Activated B cell treated with CpG ODN at 0.5 μM for 24 hours (primary cell): ENCODE measurements at regions of chr7 and their contacts with region 1.

Region 1: DNA sequence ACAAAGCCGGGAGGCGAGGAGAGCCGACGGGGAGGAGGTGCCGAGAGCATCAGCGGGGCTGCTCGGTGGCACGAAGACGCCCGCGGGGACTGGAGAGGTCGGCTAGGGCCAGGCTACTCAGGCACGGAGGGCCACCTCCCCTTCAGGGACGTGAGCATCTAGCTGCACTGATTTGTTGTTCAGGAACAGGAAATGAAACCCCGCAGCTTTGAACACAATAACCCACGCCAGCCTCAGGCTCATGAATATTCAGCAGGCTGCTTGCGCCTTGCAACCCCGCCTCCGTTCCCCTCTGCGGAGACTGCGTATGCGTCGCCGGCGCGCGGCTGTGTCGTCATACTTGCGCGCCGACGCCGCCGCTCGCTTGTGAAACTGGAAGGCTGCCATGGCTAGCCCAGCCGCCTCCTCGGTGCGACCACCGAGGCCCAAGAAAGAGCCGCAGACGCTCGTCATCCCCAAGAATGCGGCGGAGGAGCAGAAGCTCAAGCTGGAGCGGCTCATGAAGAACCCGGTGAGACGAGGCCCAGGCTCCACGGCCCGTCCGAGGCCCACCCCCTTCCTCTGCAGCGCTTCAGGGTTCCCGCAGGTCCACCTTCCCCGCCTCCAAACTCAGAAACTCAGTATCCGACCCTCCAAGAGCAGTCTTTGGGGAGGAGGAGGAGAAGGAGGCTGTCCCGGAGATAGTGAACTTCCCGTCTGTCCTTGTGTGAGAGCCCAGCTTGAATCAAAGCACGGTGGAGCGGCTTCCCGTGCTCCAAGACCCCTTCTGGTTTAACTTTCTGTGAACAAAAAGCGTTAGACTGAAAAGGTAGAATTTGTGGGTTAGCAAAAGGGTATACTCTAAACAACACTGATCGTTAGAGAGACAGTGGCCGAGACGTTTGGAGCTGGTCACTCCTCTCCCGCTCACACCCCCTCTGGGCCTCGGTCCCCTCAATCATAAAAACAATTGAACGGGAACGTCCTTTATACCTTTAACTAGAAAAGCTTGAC is at the start of gene PRKRIP1:
- DNase-seq: peak; percentile 72
- ATAC-seq: peak; percentile 98
- H3K4me3 Mint-ChIP-seq: peak within 1 kb of the TSS; percentile 93
- H3K27ac Mint-ChIP-seq: peak within 1 kb of the TSS; percentile 96
- H3K4me1 Mint-ChIP-seq: peaks cover 34% of the 10 kb centered on the region
- H3K27me3 Mint-ChIP-seq: no peaks in the 10 kb centered on the region
- CTCF ChIP-seq: no peak
- total RNA-seq, gene PRKRIP1: 38.8 and 39.7 TPM in 2 replicates

Region 2: GRCh38 chr7:100719523-100720319 is 1676.6 kb before region 1 on chr7:
- CTCF ChIA-PET with region 1: no interaction called
- POLR2A ChIA-PET with region 1: no interaction called
- intact Hi-C with region 1: no loop called
- DNase-seq: no peak
- ATAC-seq: no peak
- H3K4me3 Mint-ChIP-seq: no peak overlapping the region
- H3K27ac Mint-ChIP-seq: no peak overlapping the region
- H3K4me1 Mint-ChIP-seq: peaks cover 4% of the 10 kb centered on the region
- H3K27me3 Mint-ChIP-seq: peaks cover 38% of the 10 kb centered on the region
- CTCF ChIP-seq: no peak

Region 3: GRCh38 chr7:101743241-101743994 is 652.9 kb before region 1 on chr7:
- CTCF ChIA-PET with region 1: no interaction called
- POLR2A ChIA-PET with region 1: interaction called, 3 read pairs
- intact Hi-C with region 1: loop called (anchors 10 kb)
- DNase-seq: peak; percentile 53
- ATAC-seq: peak; percentile 63
- H3K4me3 Mint-ChIP-seq: peak overlapping the region; percentile 82
- H3K27ac Mint-ChIP-seq: no peak overlapping the region
- H3K4me1 Mint-ChIP-seq: peaks cover 52% of the 10 kb centered on the region
- H3K27me3 Mint-ChIP-seq: no peaks in the 10 kb centered on the region
- CTCF ChIP-seq: no peak

Region 4: GRCh38 chr7:102286237-102287110 is 109.8 kb before region 1 on chr7 and contains the start of gene SH2B2:
- CTCF ChIA-PET with region 1: interaction called, 91 read pairs
- POLR2A ChIA-PET with region 1: interaction called, 34 read pairs
- intact Hi-C with region 1: loop called (anchors 1 kb)
- DNase-seq: peak; percentile 83
- ATAC-seq: peak; percentile 38
- H3K4me3 Mint-ChIP-seq: peak within 1 kb of the TSS; percentile 83
- H3K27ac Mint-ChIP-seq: peak within 1 kb of the TSS; percentile 53
- H3K4me1 Mint-ChIP-seq: peaks cover 64% of the 10 kb centered on the region
- H3K27me3 Mint-ChIP-seq: no peaks in the 10 kb centered on the region
- CTCF ChIP-seq: no peak
- total RNA-seq, gene SH2B2: 28.2 and 32.1 TPM in 2 replicates

Region 5: GRCh38 chr7:102412548-102412947 is 16.2 kb after region 1 on chr7:
- CTCF ChIA-PET with region 1: interaction called, 10 read pairs
- POLR2A ChIA-PET with region 1: interaction called, 8 read pairs
- intact Hi-C with region 1: no loop called
- DNase-seq: no peak
- ATAC-seq: no peak
- H3K4me3 Mint-ChIP-seq: no peak overlapping the region
- H3K27ac Mint-ChIP-seq: peak overlapping the region; percentile 41
- H3K4me1 Mint-ChIP-seq: peaks cover 76% of the 10 kb centered on the region
- H3K27me3 Mint-ChIP-seq: no peaks in the 10 kb centered on the region
- CTCF ChIP-seq: no peak

Region 6: DNA sequence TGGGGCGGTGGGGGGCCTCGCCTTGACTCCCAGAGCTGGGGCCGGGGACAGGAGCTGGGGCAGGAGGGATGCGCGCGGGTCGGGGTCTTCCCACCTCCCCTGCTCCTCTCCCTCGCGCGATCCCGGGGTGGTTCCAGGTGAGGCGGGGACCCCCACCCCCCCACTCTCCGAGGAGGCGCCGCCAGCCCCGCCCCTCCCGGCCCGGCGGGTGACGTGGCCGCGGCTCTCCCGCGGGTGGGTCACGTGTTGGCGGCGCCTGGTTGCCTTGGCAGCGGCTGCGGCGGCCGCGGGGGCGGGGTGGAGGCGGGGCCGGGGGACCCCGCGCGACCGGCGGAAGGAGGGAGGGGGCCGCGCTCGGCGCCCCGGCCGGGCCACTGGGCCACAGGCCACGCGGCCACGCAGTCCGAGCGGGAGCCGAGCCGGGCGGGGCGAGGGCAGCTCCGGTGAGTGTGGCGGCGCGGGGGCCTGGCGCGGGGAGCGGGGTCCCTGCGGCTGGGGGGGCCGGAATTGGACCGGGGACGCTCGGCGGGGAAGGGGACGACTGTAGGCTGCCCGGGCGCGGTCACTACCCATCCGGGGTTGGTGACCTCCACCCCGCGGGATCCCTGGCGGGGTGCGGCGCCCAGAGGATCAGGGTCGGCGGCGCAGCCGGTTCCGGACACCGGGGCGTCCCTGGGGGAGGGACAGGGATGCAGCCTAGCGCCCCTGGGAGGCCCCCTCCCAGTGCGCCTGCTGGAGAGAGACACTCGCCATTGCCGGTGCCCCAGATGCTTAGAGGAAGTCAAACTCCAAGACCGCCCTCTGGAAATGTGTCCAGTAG is 37.1 kb after region 1 on chr7 and contains the start of gene ORAI2:
- CTCF ChIA-PET with region 1: no interaction called
- POLR2A ChIA-PET with region 1: interaction called, 12 read pairs
- intact Hi-C with region 1: no loop called
- DNase-seq: peak; percentile 89
- ATAC-seq: peak; percentile 57
- H3K4me3 Mint-ChIP-seq: peak within 1 kb of the TSS; percentile 89
- H3K27ac Mint-ChIP-seq: peak within 1 kb of the TSS; percentile 100
- H3K4me1 Mint-ChIP-seq: peaks cover 80% of the 10 kb centered on the region
- H3K27me3 Mint-ChIP-seq: no peaks in the 10 kb centered on the region
- CTCF ChIP-seq: no peak
- total RNA-seq, gene ORAI2: 167 and 184 TPM in 2 replicates

Region 7: DNA sequence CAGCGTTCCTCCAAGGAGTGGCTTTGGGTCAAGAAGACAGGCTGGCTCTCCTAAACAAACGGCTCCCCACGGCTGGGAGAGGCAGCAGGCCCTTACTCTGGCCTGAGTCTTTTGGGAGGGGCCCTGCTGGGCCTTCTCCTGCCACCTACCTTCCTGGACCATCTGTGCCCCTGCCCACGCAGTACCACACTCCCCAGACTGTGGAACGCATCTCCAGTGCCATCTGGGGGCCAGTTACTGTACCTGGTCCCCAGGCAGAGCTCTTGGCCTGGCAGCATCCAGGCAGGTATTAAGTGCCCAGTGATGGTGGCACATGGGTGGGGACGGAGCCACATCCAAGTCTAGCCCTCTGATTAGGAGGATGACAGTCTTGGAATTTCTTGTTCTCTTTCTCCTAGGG is 53.9 kb after region 1 on chr7:
- CTCF ChIA-PET with region 1: interaction called, 11 read pairs
- POLR2A ChIA-PET with region 1: interaction called, 8 read pairs
- intact Hi-C with region 1: no loop called
- DNase-seq: peak; percentile 46
- ATAC-seq: peak; percentile 88
- H3K4me3 Mint-ChIP-seq: no peak overlapping the region
- H3K27ac Mint-ChIP-seq: peak overlapping the region; percentile 63
- H3K4me1 Mint-ChIP-seq: peaks cover 29% of the 10 kb centered on the region
- H3K27me3 Mint-ChIP-seq: no peaks in the 10 kb centered on the region
- CTCF ChIP-seq: no peak